ENCODE measurements at regions of chr10 and their contacts with region 1.

Region 1: GRCh38 chr10:119872860-119873681 is 428 bp upstream of the MCMBP start:
- DNase-seq: peak; percentile 93
- ATAC-seq: peak; percentile 97
- H3K4me3 Mint-ChIP-seq: peak overlapping the region; percentile 82
- H3K27ac Mint-ChIP-seq: peak overlapping the region; percentile 90
- H3K4me1 Mint-ChIP-seq: peaks cover 31% of the 10 kb centered on the region
- H3K27me3 Mint-ChIP-seq: no peaks in the 10 kb centered on the region

Region 2: DNA sequence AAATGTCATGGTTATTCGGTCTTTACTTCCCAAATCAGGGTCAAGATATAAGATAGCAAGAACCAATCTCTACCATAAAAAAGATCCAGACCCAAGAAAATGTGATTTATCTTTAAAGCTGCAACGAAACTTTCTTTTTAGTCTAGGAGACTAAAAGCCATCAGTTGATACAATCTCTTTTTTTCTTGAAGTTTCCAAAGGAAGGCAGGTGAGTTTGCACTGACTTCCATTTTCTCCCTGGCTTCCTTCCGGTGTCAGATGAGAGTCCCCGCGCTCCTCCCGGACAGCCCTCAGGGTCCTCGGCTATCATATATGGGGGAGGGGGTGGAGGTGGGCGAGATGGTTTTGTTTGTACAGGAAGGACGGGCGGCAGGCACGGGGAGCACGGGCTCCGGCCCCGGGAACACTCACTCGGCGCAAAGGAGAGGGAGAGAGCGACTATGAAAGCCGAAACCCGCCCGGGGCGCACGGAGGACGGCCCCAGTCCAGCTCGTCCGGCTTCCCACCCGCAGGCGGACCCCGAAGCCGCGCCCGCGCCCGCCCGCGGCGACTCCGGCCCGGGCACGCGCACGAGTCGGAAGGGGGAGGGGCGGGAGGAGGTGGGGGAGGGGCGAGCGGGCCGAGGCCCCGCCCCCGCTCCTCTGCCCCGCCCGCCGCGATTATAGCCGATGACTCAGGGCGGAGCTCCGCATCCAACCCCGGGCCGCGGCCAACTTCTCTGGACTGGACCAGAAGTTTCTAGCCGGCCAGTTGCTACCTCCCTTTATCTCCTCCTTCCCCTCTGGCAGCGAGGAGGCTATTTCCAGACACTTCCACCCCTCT is 222.2 kb before region 1 on chr10 and contains the start of gene BAG3:
- POLR2A ChIA-PET with region 1: interaction called, 21 read pairs
- DNase-seq: peak; percentile 85
- ATAC-seq: peak; percentile 69
- H3K4me3 Mint-ChIP-seq: peak within 1 kb of the TSS; percentile 98
- H3K27ac Mint-ChIP-seq: peak within 1 kb of the TSS; percentile 99
- H3K4me1 Mint-ChIP-seq: peaks cover 41% of the 10 kb centered on the region
- H3K27me3 Mint-ChIP-seq: peaks cover 2% of the 10 kb centered on the region
- total RNA-seq, gene BAG3: 14.5 to 15.0 TPM

Region 3: DNA sequence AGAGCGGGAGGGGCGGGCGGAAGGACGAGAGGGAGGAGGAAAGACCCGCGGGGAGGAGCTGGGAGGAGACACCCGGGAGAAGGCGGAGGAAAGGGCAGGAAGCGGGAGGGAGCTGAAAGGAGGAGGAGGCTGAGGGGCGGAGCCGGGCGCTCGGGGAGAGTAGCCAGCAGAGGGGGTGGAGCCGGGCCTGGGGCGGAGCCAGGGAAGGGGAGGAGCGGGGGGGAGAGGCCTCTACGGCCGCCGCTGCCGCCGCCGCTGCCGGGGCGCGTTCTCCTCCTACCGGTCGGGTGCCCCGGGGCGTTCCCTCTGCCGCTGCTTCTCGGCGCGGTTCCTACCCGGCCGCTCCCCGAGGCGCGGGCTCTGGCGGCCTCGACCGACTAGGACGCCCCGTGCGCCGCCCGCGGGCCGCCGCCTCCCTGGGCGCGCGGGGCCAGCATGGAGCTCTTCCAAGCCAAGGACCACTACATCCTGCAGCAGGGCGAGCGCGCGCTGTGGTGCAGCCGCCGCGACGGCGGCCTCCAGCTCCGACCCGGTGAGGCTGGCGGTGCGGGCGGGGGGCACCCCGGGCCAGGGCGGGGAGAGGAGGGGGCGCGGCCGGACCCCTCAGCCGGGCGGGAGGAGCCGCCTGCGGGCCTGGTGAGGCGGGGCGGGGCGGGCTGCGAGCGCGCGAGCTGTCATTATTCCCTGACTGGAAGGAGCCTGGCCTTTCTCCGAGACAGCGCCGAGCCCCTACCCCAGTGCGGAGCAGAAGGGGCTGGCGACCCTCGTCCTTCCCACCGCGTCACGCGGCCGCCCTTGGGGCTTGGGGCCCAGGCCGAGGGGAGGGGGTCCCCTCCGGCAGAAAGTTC is 147.0 kb before region 1 on chr10 and contains the start of gene INPP5F:
- POLR2A ChIA-PET with region 1: interaction called, 21 read pairs
- DNase-seq: peak; percentile 100
- ATAC-seq: peak; percentile 89
- H3K4me3 Mint-ChIP-seq: peak within 1 kb of the TSS; percentile 94
- H3K27ac Mint-ChIP-seq: peak within 1 kb of the TSS; percentile 86
- H3K4me1 Mint-ChIP-seq: peaks cover 33% of the 10 kb centered on the region
- H3K27me3 Mint-ChIP-seq: no peaks in the 10 kb centered on the region
- total RNA-seq, gene INPP5F: 12.2 to 13.5 TPM

Region 4: GRCh38 chr10:119807960-119808697 is 64.9 kb before region 1 on chr10:
- POLR2A ChIA-PET with region 1: no interaction called
- DNase-seq: no peak
- ATAC-seq: peak; percentile 89
- H3K4me3 Mint-ChIP-seq: no peak overlapping the region
- H3K27ac Mint-ChIP-seq: peak overlapping the region; percentile 26
- H3K4me1 Mint-ChIP-seq: peaks cover 9% of the 10 kb centered on the region
- H3K27me3 Mint-ChIP-seq: no peaks in the 10 kb centered on the region

Region 5: DNA sequence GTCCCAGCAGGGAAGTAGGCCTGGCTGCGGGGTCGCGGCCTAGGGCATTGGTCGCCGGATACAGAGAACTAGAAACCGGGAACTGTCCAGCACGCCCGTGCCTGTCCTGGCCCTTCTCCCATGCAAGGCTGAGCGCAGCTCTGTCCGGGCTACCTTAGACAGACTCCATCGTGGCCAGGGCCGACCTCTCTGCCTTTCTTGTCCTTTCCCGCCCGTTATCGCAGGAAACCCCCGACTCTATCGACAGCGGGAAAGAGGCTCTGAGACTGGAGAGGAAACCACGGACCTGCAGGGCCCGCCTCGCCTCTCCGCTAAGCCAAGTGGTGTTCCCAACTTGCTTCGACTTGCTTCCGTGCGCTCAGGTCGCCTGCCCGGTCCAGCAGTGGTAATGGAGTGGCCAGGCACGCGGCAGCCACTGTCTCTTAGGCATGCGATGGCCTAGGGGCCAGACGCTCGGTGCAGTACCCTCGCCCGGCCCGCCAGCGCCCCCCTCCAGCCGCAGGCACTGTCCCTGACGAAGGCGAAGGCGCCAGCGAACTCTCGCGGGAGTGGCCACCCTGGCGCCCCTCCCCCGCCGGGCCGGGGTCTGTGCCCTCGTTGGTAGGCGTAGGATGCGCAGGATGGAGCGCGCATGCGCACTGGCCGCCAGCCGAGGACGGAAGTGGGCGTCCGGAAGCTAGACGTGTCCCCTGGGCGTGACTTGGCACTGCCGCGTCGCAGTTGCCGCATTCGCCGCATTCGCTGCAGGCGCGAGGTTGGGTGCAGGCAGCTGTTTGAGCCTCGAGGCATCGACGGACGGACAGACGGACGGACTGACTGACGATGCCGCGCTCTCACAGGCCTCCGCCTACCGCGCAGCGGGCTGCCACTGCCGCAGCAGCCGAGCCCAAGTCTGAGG is 54.8 kb before region 1 on chr10:
- POLR2A ChIA-PET with region 1: no interaction called
- DNase-seq: no peak
- ATAC-seq: no peak
- H3K4me3 Mint-ChIP-seq: no peak overlapping the region
- H3K27ac Mint-ChIP-seq: no peak overlapping the region
- H3K4me1 Mint-ChIP-seq: peaks cover 8% of the 10 kb centered on the region
- H3K27me3 Mint-ChIP-seq: no peaks in the 10 kb centered on the region

Region 6: GRCh38 chr10:119859420-119860258 is 13.4 kb before region 1 on chr10:
- POLR2A ChIA-PET with region 1: interaction called, 13 read pairs
- DNase-seq: no peak
- ATAC-seq: no peak
- H3K4me3 Mint-ChIP-seq: no peak overlapping the region
- H3K27ac Mint-ChIP-seq: no peak overlapping the region
- H3K4me1 Mint-ChIP-seq: peaks cover 25% of the 10 kb centered on the region
- H3K27me3 Mint-ChIP-seq: no peaks in the 10 kb centered on the region

Region 7: DNA sequence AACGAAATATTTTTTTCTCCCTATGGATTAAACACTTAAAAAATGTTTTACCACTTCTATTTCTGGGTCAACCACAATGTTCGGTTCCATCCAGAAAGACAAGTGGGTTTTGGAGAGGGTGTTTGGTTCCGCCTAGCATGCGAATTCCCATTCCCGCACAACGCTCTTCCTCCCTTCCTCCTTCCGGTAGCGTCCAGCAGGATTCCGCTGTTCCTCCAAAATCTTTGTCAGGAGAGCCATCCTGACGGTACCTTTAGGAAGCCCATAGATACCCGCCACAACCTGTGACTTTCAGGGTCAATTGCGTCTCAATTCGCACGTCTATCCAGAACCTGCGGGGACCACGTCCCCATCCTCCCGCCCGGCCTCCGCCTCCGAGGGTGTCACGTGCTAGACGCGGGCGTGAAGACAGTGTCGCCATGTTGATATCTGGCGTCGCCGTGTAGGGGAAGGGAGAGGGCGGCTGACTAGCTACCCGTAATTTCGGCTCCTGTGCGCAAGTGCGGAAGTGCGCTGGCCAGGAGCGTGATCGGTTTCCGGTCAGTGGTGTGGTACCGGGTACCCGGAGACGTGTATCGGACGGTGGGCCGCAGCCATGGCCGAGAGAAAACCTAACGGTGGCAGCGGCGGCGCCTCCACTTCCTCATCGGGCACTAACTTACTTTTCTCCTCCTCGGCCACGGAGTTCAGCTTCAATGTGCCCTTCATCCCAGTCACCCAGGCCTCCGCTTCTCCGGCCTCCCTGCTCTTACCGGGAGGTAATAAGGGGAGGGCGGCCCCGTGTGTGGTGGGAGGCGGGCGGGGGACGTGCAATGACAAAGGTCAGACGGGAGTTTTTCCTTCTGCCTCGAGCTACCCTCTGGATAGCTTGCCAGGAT is 19.4 kb after region 1 on chr10 and contains the start of gene SEC23IP:
- POLR2A ChIA-PET with region 1: interaction called, 61 read pairs
- DNase-seq: peak; percentile 89
- ATAC-seq: peak; percentile 99
- H3K4me3 Mint-ChIP-seq: peak within 1 kb of the TSS; percentile 99
- H3K27ac Mint-ChIP-seq: peak within 1 kb of the TSS; percentile 94
- H3K4me1 Mint-ChIP-seq: peaks cover 32% of the 10 kb centered on the region
- H3K27me3 Mint-ChIP-seq: peaks cover 4% of the 10 kb centered on the region
- total RNA-seq, gene SEC23IP: 50.5 to 64.2 TPM